ENCODE measurements at regions of chr9 and their contacts with region 1.

Region 1: DNA sequence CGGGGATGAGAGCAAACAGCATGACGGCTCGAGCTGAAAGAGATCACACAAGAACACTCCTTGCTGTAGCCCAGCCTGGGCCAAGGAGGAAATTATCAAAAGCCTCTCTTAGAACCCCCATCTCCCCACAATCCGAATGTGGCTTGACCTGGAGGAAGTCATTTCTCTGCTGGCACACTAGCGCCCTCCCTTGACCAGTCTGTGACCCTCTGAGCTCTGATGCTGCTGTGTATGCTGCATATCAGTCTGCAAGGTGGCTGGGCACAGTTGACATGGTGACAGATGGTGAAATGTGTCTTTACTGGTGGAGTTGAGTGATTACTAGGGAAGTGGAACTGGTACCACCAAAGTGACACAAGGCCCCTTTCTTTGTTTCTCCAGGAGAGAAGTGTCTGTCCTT is 3.3 kb downstream of the SLC46A2 start:
- DNase-seq: peak; percentile 80 to 84 (median 84)
- H3K4me3 ChIP-seq: peak overlapping the region in 1 of 3 experiments; percentile 92
- H3K4me3 Mint-ChIP-seq: peak overlapping the region; percentile 94 to 98
- H3K27ac ChIP-seq: peak overlapping the region in 1 of 2 donors; percentile 48
- H3K27ac Mint-ChIP-seq: peak overlapping the region; percentile 60 to 87 (median 75)
- H3K4me1 ChIP-seq: peaks cover 55 to 67% of the 10 kb centered on the region in 2 donors
- H3K4me1 Mint-ChIP-seq: peaks cover 60% of the 10 kb centered on the region
- H3K27me3 ChIP-seq: no peaks in the 10 kb centered on the region
- H3K27me3 Mint-ChIP-seq: peaks cover 1 to 9% (median 6%) of the 10 kb centered on the region in 3 donors
- CTCF ChIP-seq: peak; percentile 83

Region 2: GRCh38 chr9:112717661-112718341 is 169.6 kb before region 1 on chr9 and contains the start of gene INIP:
- intact Hi-C with region 1: loop called in 1 of 2 experiments (anchors 10 kb)
- DNase-seq: peak; percentile 93 to 96 (median 94)
- H3K4me3 ChIP-seq: peak within 1 kb of the TSS; percentile 74 to 88 (median 86)
- H3K4me3 Mint-ChIP-seq: peak within 1 kb of the TSS; percentile 98 to 99
- H3K27ac ChIP-seq: peak within 1 kb of the TSS; percentile 87 to 97
- H3K27ac Mint-ChIP-seq: peak within 1 kb of the TSS; percentile 97 to 100 (median 99)
- H3K4me1 ChIP-seq: peaks cover 11 to 12% of the 10 kb centered on the region in 2 donors
- H3K4me1 Mint-ChIP-seq: peaks cover 6% of the 10 kb centered on the region
- H3K27me3 ChIP-seq: no peaks in the 10 kb centered on the region
- H3K27me3 Mint-ChIP-seq: no peaks in the 10 kb centered on the region
- CTCF ChIP-seq: no peak
- polyA plus RNA-seq, gene INIP: 10.7 to 53.0 (median 49.0) TPM

Region 3: GRCh38 chr9:112764344-112764743 is 123.0 kb before region 1 on chr9:
- intact Hi-C with region 1: no loop called
- DNase-seq: no peak
- H3K4me3 ChIP-seq: no peak overlapping the region
- H3K4me3 Mint-ChIP-seq: no peak overlapping the region
- H3K27ac ChIP-seq: no peak overlapping the region
- H3K27ac Mint-ChIP-seq: peak overlapping the region in 4 of 7 donors; percentile 32 to 68 (median 52)
- H3K4me1 ChIP-seq: no peaks in the 10 kb centered on the region
- H3K4me1 Mint-ChIP-seq: peaks cover 29% of the 10 kb centered on the region
- H3K27me3 ChIP-seq: no peaks in the 10 kb centered on the region
- H3K27me3 Mint-ChIP-seq: peaks cover 0 to 2% (median 2%) of the 10 kb centered on the region in 3 donors
- CTCF ChIP-seq: no peak

Region 4: GRCh38 chr9:112844771-112845542 is 42.4 kb before region 1 on chr9:
- intact Hi-C with region 1: loop called (anchors 2 to 5 kb)
- DNase-seq: peak; percentile 65 to 78 (median 75)
- H3K4me3 ChIP-seq: peak overlapping the region in 1 of 3 experiments; percentile 35
- H3K4me3 Mint-ChIP-seq: peak overlapping the region in 1 of 2 donors; percentile 36
- H3K27ac ChIP-seq: peak overlapping the region in 1 of 2 donors; percentile 65
- H3K27ac Mint-ChIP-seq: peak overlapping the region in 6 of 7 donors; percentile 64 to 83 (median 72)
- H3K4me1 ChIP-seq: peaks cover 42 to 58% of the 10 kb centered on the region in 2 donors
- H3K4me1 Mint-ChIP-seq: peaks cover 57% of the 10 kb centered on the region
- H3K27me3 ChIP-seq: no peaks in the 10 kb centered on the region
- H3K27me3 Mint-ChIP-seq: peaks cover 0 to 2% (median 0%) of the 10 kb centered on the region in 3 donors
- CTCF ChIP-seq: peak; percentile 97